A673 (cell line): ENCODE measurements at regions of chr10 and their contacts with region 1.

Region 1: GRCh38 chr10:115355162-115355760 is 262.1 kb downstream of the ATRNL1 start:
- DNase-seq: peak; percentile 70
- H3K4me3 ChIP-seq: no peak overlapping the region
- H3K27ac ChIP-seq: no peak overlapping the region
- H3K4me1 ChIP-seq: no peaks in the 10 kb centered on the region
- H3K27me3 ChIP-seq: peaks cover 6% of the 10 kb centered on the region
- CTCF ChIP-seq: peak; percentile 74

Region 2: GRCh38 chr10:114271779-114272167 is 1083.5 kb before region 1 on chr10:
- CTCF ChIA-PET with region 1: no interaction called
- POLR2A ChIA-PET with region 1: no interaction called
- intact Hi-C with region 1: no loop called
- DNase-seq: no peak
- H3K4me3 ChIP-seq: no peak overlapping the region
- H3K27ac ChIP-seq: no peak overlapping the region
- H3K4me1 ChIP-seq: no peaks in the 10 kb centered on the region
- H3K27me3 ChIP-seq: peaks cover 8% of the 10 kb centered on the region
- CTCF ChIP-seq: no peak

Region 3: GRCh38 chr10:115321360-115321759 is 33.9 kb before region 1 on chr10:
- CTCF ChIA-PET with region 1: no interaction called
- POLR2A ChIA-PET with region 1: no interaction called
- intact Hi-C with region 1: no loop called
- DNase-seq: no peak
- H3K4me3 ChIP-seq: no peak overlapping the region
- H3K27ac ChIP-seq: no peak overlapping the region
- H3K4me1 ChIP-seq: no peaks in the 10 kb centered on the region
- H3K27me3 ChIP-seq: no peaks in the 10 kb centered on the region
- CTCF ChIP-seq: no peak

Region 4: DNA sequence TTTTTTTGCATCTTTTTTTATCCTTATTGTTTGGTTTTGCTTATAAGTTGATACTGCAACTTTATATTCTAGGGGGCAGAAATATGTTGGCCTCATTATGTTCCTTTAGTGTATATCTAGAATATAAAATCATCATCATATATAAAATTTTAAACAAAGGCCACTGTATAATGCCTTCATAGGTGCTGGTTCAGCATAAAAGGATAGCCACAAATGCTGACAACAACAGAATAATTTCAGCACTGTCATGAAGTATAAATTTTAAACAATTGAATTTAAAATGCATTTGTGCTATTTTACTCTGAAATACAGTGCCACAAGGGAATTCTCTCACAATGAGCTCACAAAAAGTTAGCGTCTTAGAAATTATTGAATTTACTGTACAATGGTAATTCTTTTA is 23.8 kb after region 1 on chr10:
- CTCF ChIA-PET with region 1: no interaction called
- POLR2A ChIA-PET with region 1: no interaction called
- intact Hi-C with region 1: no loop called
- DNase-seq: no peak
- H3K4me3 ChIP-seq: no peak overlapping the region
- H3K27ac ChIP-seq: no peak overlapping the region
- H3K4me1 ChIP-seq: no peaks in the 10 kb centered on the region
- H3K27me3 ChIP-seq: no peaks in the 10 kb centered on the region
- CTCF ChIP-seq: no peak

Region 5: GRCh38 chr10:115572706-115573455 is 217.6 kb after region 1 on chr10:
- CTCF ChIA-PET with region 1: no interaction called
- POLR2A ChIA-PET with region 1: no interaction called
- intact Hi-C with region 1: loop called (anchors 5 kb)
- DNase-seq: peak; percentile 21
- H3K4me3 ChIP-seq: no peak overlapping the region
- H3K27ac ChIP-seq: no peak overlapping the region
- H3K4me1 ChIP-seq: no peaks in the 10 kb centered on the region
- H3K27me3 ChIP-seq: peaks cover under 1% of the 10 kb centered on the region
- CTCF ChIP-seq: peak; percentile 62